Caco-2 (cell line): ENCODE measurements at regions of chr5 and their contacts with region 1.

Region 1: DNA sequence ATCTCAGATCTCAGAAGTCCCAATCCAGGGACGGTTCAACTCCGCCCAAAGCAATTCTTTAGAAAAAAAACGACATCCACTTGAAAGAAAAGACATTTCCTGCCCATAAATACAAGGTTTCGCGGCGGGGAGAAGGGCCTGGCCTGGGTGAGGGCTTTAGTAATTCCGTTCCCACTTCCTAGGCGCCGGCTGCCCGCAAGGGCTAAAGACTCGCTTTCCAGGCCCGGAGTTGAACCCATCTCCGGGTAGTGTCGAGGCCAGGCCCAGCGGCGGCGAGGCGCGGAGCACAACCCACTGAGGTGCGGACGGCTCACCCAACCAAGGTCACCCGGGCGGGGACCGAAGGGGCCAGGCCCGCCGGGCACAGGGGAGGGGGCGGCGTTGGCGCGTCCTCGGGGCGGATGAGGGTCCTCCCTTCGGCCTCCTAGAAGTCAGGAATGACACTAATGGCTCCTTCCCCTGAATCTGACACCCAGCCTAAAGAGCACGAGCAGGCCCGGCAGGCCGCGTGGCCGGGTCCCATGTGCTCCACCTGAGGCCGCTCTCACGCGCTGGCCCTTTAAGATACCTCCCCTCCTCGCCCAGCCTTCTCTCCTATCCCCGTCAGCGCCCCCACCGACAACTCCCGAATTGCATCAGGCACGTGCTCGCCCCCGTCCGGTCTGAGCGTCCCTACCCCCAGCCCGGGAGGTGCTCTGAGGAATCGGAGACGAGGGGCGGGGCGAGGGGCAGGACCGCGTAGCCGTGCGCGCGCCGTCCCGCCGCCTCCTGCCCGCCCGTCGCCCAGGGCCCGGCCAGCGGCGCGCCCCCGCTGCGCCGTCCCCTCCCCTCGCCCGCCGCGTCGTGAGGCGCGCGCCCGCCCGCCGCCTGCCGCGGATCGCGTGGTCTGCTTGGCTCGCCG is 467 bp upstream of the LARP1 start:
- DNase-seq: peak; percentile 100
- H3K4me3 ChIP-seq: peak overlapping the region; percentile 68
- H3K4me3 Mint-ChIP-seq: peak overlapping the region; percentile 85
- H3K27ac Mint-ChIP-seq: peak overlapping the region; percentile 90
- H3K4me1 ChIP-seq: peaks cover 18% of the 10 kb centered on the region
- H3K4me1 Mint-ChIP-seq: peaks cover 22% of the 10 kb centered on the region
- H3K27me3 ChIP-seq: no peaks in the 10 kb centered on the region
- H3K27me3 Mint-ChIP-seq: no peaks in the 10 kb centered on the region
- CTCF ChIP-seq: peak; percentile 42 to 62

Region 2: GRCh38 chr5:154593071-154593470 is 161.6 kb before region 1 on chr5:
- CTCF ChIA-PET with region 1: no interaction called
- POLR2A ChIA-PET with region 1: no interaction called
- intact Hi-C with region 1: no loop called
- DNase-seq: no peak
- H3K4me3 ChIP-seq: no peak overlapping the region
- H3K4me3 Mint-ChIP-seq: no peak overlapping the region
- H3K27ac Mint-ChIP-seq: no peak overlapping the region
- H3K4me1 ChIP-seq: peaks cover 8% of the 10 kb centered on the region; the same call in 1 of the 2 replicates
- H3K4me1 Mint-ChIP-seq: no peaks in the 10 kb centered on the region
- H3K27me3 ChIP-seq: no peaks in the 10 kb centered on the region
- H3K27me3 Mint-ChIP-seq: no peaks in the 10 kb centered on the region
- CTCF ChIP-seq: no peak

Region 3: GRCh38 chr5:154653764-154654485 is 100.8 kb before region 1 on chr5:
- CTCF ChIA-PET with region 1: interaction called, 3 read pairs
- POLR2A ChIA-PET with region 1: no interaction called
- intact Hi-C with region 1: loop called (anchors 2 kb)
- DNase-seq: peak; percentile 39 to 53
- H3K4me3 ChIP-seq: no peak overlapping the region
- H3K4me3 Mint-ChIP-seq: no peak overlapping the region
- H3K27ac Mint-ChIP-seq: peak overlapping the region; percentile 32
- H3K4me1 ChIP-seq: peaks cover 27% of the 10 kb centered on the region
- H3K4me1 Mint-ChIP-seq: no peaks in the 10 kb centered on the region
- H3K27me3 ChIP-seq: no peaks in the 10 kb centered on the region
- H3K27me3 Mint-ChIP-seq: no peaks in the 10 kb centered on the region
- CTCF ChIP-seq: no peak

Region 4: GRCh38 chr5:154697371-154697770 is 57.3 kb before region 1 on chr5:
- CTCF ChIA-PET with region 1: no interaction called
- POLR2A ChIA-PET with region 1: no interaction called
- intact Hi-C with region 1: loop called (anchors 5 kb)
- DNase-seq: no peak
- H3K4me3 ChIP-seq: no peak overlapping the region
- H3K4me3 Mint-ChIP-seq: no peak overlapping the region
- H3K27ac Mint-ChIP-seq: no peak overlapping the region
- H3K4me1 ChIP-seq: peaks cover 35% of the 10 kb centered on the region
- H3K4me1 Mint-ChIP-seq: peaks cover 29% of the 10 kb centered on the region
- H3K27me3 ChIP-seq: no peaks in the 10 kb centered on the region
- H3K27me3 Mint-ChIP-seq: no peaks in the 10 kb centered on the region
- CTCF ChIP-seq: no peak

Region 5: GRCh38 chr5:154811653-154812365 is 57.1 kb after region 1 on chr5:
- CTCF ChIA-PET with region 1: no interaction called
- POLR2A ChIA-PET with region 1: no interaction called
- intact Hi-C with region 1: loop called (anchors 5 kb)
- DNase-seq: peak; percentile 62 to 66
- H3K4me3 ChIP-seq: no peak overlapping the region
- H3K4me3 Mint-ChIP-seq: no peak overlapping the region
- H3K27ac Mint-ChIP-seq: peak overlapping the region; percentile 36
- H3K4me1 ChIP-seq: peaks cover 9% of the 10 kb centered on the region; the same call in 1 of the 2 replicates
- H3K4me1 Mint-ChIP-seq: peaks cover 10% of the 10 kb centered on the region
- H3K27me3 ChIP-seq: no peaks in the 10 kb centered on the region
- H3K27me3 Mint-ChIP-seq: no peaks in the 10 kb centered on the region
- CTCF ChIP-seq: peak; percentile 89 to 91

Region 6: GRCh38 chr5:154940772-154941620 is 186.3 kb after region 1 on chr5 and contains the start of gene MRPL22:
- CTCF ChIA-PET with region 1: no interaction called
- POLR2A ChIA-PET with region 1: no interaction called
- intact Hi-C with region 1: no loop called
- DNase-seq: peak; percentile 93 to 95
- H3K4me3 ChIP-seq: peak within 1 kb of the TSS; percentile 65
- H3K4me3 Mint-ChIP-seq: peak within 1 kb of the TSS; percentile 93
- H3K27ac Mint-ChIP-seq: peak within 1 kb of the TSS; percentile 90
- H3K4me1 ChIP-seq: peaks cover 14% of the 10 kb centered on the region
- H3K4me1 Mint-ChIP-seq: peaks cover 14% of the 10 kb centered on the region
- H3K27me3 ChIP-seq: no peaks in the 10 kb centered on the region
- H3K27me3 Mint-ChIP-seq: no peaks in the 10 kb centered on the region
- CTCF ChIP-seq: no peak
- total RNA-seq, gene MRPL22: 84.8 and 87.8 TPM in 2 replicates